ENCODE measurements at regions of chr18 and their contacts with region 1.

Region 1: GRCh38 chr18:35756506-35757117 is 175.1 kb downstream of the GALNT1 start:
- DNase-seq: peak; percentile 47
- H3K4me3 ChIP-seq: no peak overlapping the region
- H3K27ac ChIP-seq: no peak overlapping the region
- H3K4me1 ChIP-seq: peaks cover 19% of the 10 kb centered on the region
- H3K27me3 ChIP-seq: no peaks in the 10 kb centered on the region
- CTCF ChIP-seq: peak; percentile 54 to 68

Region 2: GRCh38 chr18:35407871-35408481 is 348.6 kb before region 1 on chr18:
- CTCF ChIA-PET with region 1: no interaction called
- dilution Hi-C with region 1: no loop called
- in situ Hi-C with region 1: no loop called
- intact Hi-C with region 1: loop called (anchors 5 kb)
- DNase-seq: peak; percentile 66
- H3K4me3 ChIP-seq: no peak overlapping the region
- H3K27ac ChIP-seq: no peak overlapping the region
- H3K4me1 ChIP-seq: peaks cover 40% of the 10 kb centered on the region
- H3K27me3 ChIP-seq: no peaks in the 10 kb centered on the region
- CTCF ChIP-seq: peak; percentile 69 to 81

Region 3: DNA sequence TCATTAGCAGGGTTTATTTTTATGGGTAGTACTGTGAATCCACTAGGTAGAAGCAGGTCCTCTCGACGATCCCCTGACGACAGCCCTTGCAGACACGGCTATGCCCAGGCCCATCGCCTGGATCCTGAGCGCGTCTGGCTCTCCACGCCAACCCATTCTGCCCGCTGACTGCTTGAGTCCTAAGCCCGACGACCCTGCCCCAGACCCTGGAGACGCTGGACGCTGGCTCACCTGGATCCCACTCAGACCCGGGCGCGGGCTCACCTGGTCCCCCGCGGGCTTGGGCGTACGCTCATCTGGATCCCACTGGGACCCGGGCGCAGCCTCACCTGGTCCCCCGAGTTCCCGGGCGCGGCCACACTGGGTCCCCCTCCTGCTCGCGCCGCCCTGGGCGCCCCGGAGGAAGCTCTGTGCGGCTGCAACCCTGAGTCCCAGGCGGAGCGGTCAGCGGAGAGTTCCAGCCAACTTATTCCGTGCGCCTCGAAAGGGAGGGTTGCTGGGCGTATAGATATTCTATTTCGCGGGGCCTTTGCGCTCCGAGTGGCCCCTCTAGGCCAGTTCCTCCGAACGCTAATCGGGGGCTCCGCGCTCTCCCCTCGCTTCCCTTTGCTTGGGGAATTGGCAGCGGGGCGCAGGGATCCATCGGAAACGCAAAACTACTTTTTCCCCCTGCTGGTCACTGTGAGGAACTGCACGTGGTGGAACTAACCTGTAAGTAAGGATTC is 193.5 kb after region 1 on chr18:
- CTCF ChIA-PET with region 1: no interaction called
- dilution Hi-C with region 1: no loop called
- in situ Hi-C with region 1: loop called (anchors 5 to 10 kb)
- intact Hi-C with region 1: loop called (anchors 1 kb)
- DNase-seq: peak; percentile 61
- H3K4me3 ChIP-seq: peak overlapping the region; percentile 60 to 87 (median 66)
- H3K27ac ChIP-seq: no peak overlapping the region
- H3K4me1 ChIP-seq: peaks cover 8% of the 10 kb centered on the region
- H3K27me3 ChIP-seq: no peaks in the 10 kb centered on the region
- CTCF ChIP-seq: peak; percentile 74 to 91

Region 4: DNA sequence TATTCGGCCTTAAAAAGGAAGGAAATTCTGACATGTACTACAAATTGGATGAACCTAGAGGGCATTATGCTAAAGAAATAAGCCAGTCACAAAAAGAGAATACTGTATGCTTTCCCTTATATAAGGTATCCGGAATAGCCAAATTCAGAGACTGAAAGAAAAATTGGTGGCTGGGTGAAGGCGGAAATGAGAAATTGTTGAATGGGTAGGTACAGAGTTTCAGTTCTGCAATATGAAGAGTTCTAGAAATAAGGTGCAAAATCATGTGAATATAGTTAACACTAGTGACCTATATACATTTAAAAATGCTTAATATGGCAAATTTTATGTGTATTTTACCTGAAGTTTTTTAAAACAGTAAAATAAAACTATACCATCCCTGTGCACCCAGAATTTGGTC is 259.0 kb after region 1 on chr18:
- CTCF ChIA-PET with region 1: no interaction called
- dilution Hi-C with region 1: no loop called
- in situ Hi-C with region 1: loop called in 1 of 2 experiments (anchors 10 kb)
- intact Hi-C with region 1: loop called (anchors 2 kb)
- DNase-seq: no peak
- H3K4me3 ChIP-seq: no peak overlapping the region
- H3K27ac ChIP-seq: no peak overlapping the region
- H3K4me1 ChIP-seq: no peaks in the 10 kb centered on the region
- H3K27me3 ChIP-seq: no peaks in the 10 kb centered on the region
- CTCF ChIP-seq: no peak

Region 5: GRCh38 chr18:36284671-36285295 is 528.2 kb after region 1 on chr18:
- CTCF ChIA-PET with region 1: no interaction called
- dilution Hi-C with region 1: no loop called
- in situ Hi-C with region 1: loop called (anchors 10 to 25 kb)
- intact Hi-C with region 1: loop called (anchors 1 kb)
- DNase-seq: peak; percentile 56
- H3K4me3 ChIP-seq: no peak overlapping the region
- H3K27ac ChIP-seq: no peak overlapping the region
- H3K4me1 ChIP-seq: no peaks in the 10 kb centered on the region
- H3K27me3 ChIP-seq: no peaks in the 10 kb centered on the region
- CTCF ChIP-seq: peak; percentile 81 to 86

Region 6: DNA sequence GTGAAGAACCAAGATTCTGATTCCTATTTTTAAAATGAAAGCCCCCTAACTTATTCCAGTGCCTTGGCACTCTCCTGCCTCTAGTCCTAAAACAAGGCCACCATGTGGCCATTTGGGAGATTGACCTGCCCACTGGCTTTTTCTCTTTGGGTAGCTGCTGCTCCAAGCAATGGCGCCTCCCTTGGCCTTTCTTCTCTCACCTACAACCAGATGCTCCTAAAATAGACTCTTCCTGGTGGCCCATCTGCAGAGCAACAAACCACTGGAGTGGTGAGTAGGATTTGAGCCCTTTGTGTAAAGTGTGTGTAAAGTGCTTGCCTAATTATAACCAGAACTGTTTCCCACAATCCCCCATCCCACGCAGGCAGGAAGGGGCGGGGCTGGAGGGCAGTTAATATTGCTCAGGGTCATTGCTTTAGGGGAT is 655.1 kb after region 1 on chr18:
- CTCF ChIA-PET with region 1: no interaction called
- dilution Hi-C with region 1: no loop called
- in situ Hi-C with region 1: no loop called
- intact Hi-C with region 1: loop called (anchors 5 kb)
- DNase-seq: no peak
- H3K4me3 ChIP-seq: no peak overlapping the region
- H3K27ac ChIP-seq: no peak overlapping the region
- H3K4me1 ChIP-seq: peaks cover 4% of the 10 kb centered on the region
- H3K27me3 ChIP-seq: no peaks in the 10 kb centered on the region
- CTCF ChIP-seq: peak; percentile 48 to 63